Calu3 (cell line): ENCODE measurements at regions of chr17 and their contacts with region 1.

Region 1: DNA sequence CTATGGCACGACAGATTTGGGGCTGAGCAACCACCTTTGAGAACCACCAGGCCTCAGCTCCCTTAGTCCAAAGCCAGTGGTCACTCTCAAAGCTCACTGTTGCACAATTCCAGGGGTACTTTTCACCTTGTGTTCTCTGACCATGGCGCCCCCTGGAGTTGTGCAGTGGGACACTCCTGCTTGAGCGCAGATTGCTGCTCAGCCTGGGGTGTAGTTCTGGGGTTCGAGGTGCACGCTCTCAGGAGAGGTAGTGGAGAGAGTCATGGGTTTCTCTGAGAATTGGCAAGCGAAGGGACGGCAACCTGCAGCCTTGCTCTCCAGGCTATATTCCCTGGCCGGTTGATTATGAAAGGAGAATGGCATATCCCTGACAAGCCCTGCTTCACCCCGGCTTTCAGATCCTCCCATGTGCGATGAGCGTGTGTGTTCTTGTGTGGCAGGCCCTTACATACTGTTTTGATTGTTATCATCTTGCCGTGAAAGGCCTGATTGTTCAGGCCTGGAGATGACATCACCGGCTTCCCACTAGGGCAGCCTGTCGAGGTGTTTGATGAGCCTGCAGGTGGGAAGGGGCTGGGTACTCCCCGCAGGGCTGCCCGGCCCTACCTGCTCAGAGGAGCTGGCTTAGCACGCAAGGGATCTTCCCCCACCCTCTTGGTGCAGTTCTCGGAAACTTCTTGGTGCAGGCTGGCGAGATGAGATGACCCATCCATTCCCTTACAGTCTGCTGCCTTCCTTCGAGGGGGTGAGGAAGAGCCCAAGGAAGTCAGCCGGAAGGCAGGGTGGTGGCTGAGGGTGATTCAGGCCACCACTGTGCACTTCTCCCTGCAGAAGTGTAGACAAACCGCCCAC is 431.2 kb downstream of the SLC39A11 start:
- DNase-seq: peak; percentile 94
- H3K4me3 Mint-ChIP-seq: peak overlapping the region; percentile 18
- H3K27ac Mint-ChIP-seq: peak overlapping the region; percentile 92
- H3K4me1 Mint-ChIP-seq: peaks cover 50% of the 10 kb centered on the region
- H3K27me3 Mint-ChIP-seq: no peaks in the 10 kb centered on the region
- CTCF ChIP-seq: peak; percentile 54

Region 2: DNA sequence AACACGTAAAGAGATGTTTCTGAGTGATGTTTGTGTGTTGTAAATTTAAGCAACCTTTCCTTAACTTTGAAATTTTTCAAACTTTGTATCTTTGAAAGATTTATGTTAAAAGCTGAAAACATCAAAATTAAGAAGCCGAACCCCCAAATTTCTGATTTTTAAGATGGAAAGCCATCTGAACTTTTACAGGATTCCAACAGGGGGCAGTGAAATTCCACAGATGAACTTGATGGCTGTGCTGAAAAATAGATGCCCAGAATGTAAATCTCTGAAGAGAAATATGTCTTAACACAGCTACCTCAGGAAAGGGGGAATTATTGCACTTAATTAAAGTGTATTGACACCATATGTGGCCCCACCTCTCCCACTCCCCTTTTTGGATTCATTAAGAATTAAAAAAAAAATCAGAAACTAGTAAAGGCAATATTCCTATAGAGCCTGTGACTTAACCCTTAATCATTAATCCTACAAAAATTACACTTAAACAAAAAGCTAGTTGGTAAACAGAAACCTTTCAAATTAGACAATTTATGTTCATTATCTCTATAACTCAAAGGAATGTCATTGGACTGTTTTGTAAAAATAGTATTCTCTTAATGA is 1894.1 kb before region 1 on chr17:
- CTCF ChIA-PET with region 1: no interaction called
- intact Hi-C with region 1: loop called (anchors 5 kb)
- DNase-seq: peak; percentile 28
- H3K4me3 Mint-ChIP-seq: no peak overlapping the region
- H3K27ac Mint-ChIP-seq: no peak overlapping the region
- H3K4me1 Mint-ChIP-seq: no peaks in the 10 kb centered on the region
- H3K27me3 Mint-ChIP-seq: no peaks in the 10 kb centered on the region
- CTCF ChIP-seq: peak; percentile 57

Region 3: DNA sequence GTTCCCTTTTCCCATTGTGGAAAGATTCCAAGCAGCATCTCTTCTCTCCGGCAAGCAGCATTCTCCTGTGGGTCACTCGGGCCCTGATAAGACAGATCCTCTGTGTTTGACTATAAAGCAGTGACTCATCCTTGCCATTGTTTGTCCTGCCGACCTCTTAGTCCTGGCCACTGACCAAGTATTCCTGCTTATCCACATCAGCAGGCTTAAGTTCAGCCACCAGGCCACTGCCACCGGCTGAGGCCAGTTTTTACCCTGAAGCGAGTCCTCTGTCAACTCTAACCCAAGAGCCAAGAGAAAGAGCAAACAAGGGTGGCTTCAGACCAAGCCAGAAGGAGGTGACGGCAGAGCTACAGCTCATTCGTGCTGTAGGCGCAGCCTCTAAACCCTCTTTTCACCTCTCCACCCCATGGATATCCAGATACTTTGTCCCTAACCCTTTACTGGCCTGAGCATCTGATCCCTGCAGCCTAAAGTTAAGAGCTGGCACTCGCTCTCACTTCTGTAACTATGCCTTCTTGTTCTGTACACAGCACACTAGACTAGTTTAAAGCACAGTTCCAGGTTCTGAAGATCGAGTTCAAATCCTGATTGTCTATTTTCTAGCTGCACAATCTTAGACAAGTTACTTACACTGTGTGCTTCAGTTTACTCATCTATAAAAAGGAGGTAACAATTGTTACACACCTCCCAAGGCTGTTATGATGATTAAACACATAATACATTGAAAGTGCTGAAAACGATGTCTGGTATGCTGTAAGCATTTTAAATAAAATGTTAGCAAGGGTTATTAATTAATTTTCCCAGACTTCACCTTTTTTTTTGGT is 509.5 kb before region 1 on chr17:
- CTCF ChIA-PET with region 1: no interaction called
- intact Hi-C with region 1: no loop called
- DNase-seq: peak; percentile 62
- H3K4me3 Mint-ChIP-seq: peak overlapping the region; percentile 33
- H3K27ac Mint-ChIP-seq: peak overlapping the region; percentile 82
- H3K4me1 Mint-ChIP-seq: peaks cover 32% of the 10 kb centered on the region
- H3K27me3 Mint-ChIP-seq: peaks cover 22% of the 10 kb centered on the region
- CTCF ChIP-seq: no peak

Region 4: DNA sequence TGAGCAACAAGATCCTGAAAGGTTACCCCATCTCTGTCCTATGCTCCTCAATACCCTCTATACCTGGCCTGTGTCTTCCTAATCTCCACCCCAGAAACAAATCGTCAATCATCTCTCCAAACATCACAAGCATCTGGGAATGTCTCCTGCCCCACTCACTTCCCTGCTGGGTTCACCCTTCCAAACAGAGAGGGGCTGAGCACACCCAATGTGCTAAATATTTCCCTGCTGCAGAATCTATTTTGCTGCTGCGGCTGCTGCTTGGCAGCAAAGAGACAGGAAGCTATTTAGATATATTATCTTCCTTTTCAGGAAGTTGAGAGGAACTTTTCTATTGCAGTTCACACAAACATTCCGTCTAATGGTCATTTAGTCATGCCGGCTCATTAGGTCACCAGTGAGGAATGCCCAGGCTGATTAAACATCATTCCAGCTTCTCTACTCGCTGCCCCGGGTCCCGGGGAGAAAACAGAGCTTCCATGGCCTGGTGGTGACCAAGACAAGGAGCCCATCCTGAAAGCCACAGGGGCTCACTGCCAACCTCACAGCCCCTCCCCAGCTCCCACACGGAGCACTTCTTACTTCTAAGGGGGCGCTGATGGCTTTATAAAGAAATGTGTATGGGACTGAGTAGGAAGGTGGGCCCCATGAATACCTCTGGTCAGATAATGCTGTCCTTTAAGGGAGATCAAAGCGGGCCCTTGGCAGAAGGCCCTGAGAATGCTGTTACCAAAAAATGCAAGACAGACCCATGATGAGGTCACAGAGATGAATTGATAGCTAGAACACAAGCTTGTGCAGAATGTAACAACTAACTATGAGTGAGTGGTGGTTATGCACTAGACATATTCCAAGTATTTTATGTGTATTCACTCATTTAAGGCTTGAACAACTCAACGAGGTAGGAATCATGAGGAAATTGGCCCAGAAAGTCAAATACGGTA is 322.2 kb before region 1 on chr17:
- CTCF ChIA-PET with region 1: no interaction called
- intact Hi-C with region 1: loop called (anchors 5 kb)
- DNase-seq: peak; percentile 79
- H3K4me3 Mint-ChIP-seq: peak overlapping the region; percentile 12
- H3K27ac Mint-ChIP-seq: peak overlapping the region; percentile 78
- H3K4me1 Mint-ChIP-seq: peaks cover 40% of the 10 kb centered on the region
- H3K27me3 Mint-ChIP-seq: peaks cover 1% of the 10 kb centered on the region
- CTCF ChIP-seq: no peak

Region 5: DNA sequence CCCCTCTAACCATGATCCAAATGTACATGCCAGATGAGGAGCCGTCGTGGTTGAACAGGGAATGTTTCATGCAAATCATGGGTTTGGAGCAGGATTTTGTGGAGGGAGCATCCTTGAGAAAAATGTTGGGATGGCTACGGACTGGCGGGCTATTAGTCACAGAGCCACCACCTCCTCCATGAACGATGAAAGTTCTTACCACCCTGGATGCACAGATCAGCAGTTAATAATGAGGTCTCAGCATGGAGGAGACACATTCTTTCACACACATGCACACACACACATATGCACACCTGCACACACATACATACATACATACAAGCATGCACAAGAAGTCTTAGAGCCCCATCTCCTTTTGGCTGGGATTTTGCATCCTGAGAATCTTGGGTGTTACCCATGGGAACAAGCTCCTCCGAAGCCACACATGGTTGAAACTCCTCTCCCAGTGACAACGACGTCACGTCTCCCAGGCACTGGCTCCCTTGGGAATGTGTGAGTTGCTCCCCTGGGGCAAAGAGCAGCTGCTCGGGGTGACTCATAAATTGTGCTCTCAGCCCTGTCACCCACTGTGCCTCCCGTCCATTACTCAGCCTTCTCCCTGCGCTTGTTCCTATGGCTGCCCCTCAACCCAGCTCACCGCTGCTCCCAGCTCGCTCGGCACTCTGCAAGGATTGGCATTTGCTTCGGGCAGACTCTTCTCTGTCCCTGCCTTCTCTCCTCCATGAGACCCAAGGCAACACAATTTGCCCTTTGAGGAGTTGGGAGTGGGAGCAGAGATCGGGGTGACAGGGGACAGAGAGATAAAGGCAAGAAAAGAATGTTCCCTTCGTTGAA is 195.9 kb before region 1 on chr17:
- CTCF ChIA-PET with region 1: no interaction called
- intact Hi-C with region 1: loop called (anchors 2 kb)
- DNase-seq: peak; percentile 86
- H3K4me3 Mint-ChIP-seq: peak overlapping the region; percentile 58
- H3K27ac Mint-ChIP-seq: no peak overlapping the region
- H3K4me1 Mint-ChIP-seq: peaks cover 61% of the 10 kb centered on the region
- H3K27me3 Mint-ChIP-seq: no peaks in the 10 kb centered on the region
- CTCF ChIP-seq: no peak

Region 6: GRCh38 chr17:72618001-72618509 is 43.3 kb before region 1 on chr17:
- CTCF ChIA-PET with region 1: interaction called, 12 read pairs
- intact Hi-C with region 1: loop called (anchors 1 kb)
- DNase-seq: peak; percentile 94
- H3K4me3 Mint-ChIP-seq: peak overlapping the region; percentile 61
- H3K27ac Mint-ChIP-seq: peak overlapping the region; percentile 98
- H3K4me1 Mint-ChIP-seq: peaks cover 72% of the 10 kb centered on the region
- H3K27me3 Mint-ChIP-seq: no peaks in the 10 kb centered on the region
- CTCF ChIP-seq: no peak

Region 7: DNA sequence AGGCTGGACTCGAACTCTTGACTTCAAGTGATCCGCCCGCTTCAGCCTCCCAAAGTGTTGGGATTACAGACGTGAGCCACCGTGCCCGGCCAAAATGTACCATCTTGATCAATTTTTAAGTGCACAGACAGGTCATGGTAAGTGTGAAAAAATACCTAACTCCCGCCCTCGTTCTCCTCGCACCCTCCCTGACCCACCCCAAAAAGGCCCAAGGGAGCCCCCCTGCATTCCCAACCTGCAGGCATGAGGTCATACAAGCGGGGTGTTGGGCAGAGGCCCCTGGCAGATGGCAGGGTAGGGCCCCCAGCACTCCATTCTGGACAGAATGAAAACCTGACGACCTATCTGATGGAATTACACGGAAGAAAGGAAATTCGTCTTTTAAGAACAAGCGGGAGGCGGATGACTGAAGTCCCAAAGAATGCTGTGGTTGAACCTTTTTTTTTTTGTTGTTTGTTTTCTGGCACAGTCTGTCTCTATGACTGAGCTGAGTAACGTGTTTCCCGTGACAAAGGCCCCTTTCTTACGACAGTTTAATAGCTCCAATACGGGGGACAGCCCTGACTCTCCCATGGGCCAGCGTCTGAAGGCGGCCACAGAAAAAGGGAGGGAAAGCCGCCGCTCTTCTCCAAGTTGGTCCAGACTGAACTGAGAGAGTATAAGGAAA is 54.7 kb after region 1 on chr17:
- CTCF ChIA-PET with region 1: interaction called, 12 read pairs
- intact Hi-C with region 1: loop called (anchors 1 kb)
- DNase-seq: peak; percentile 84
- H3K4me3 Mint-ChIP-seq: peak overlapping the region; percentile 56
- H3K27ac Mint-ChIP-seq: peak overlapping the region; percentile 99
- H3K4me1 Mint-ChIP-seq: peaks cover 60% of the 10 kb centered on the region
- H3K27me3 Mint-ChIP-seq: no peaks in the 10 kb centered on the region
- CTCF ChIP-seq: no peak